ENCODE measurements at regions of chr12 and their contacts with region 1.

Region 1: DNA sequence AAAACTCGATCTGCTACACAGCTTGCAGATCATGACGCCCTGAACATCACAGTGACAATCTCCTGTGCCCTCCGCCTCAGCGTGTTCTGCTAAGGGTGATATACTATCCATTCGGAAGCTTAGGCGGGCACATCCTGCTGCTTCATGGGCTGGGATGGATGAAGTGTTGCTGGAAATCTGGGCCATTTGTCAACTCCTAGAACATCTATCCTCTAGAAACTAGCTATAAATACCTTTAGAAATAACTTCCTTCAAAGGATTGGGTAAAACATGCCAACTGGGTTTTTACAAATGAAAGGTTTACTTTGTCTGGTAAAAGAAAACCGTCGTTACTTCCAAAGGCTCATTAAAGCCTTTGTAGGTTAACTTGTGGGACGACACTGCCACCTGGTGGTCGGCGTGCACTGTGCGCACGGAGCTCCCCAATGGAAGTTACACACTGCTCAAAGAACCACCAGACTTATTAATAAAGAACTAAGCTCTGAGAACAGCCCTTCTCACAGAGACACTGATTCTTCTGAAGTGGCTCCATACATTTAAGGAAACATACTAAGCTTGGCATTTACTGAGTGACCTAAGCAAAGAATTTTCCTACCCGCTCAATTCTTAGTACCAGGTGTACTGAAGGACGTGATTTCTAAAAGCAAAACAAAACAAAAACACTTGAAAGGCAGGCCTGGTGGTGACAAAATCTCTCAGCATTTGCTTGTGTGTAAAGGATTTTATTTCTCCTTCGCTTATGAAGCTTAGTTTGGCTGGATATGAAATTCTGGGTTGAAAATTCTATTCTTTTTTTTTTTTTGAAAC is 21.6 kb upstream of the CACNA2D4 start:
- DNase-seq: peak; percentile 85 to 89
- H3K4me3 ChIP-seq: no peak overlapping the region
- H3K27ac ChIP-seq: no peak overlapping the region
- H3K4me1 ChIP-seq: peaks cover 22 to 28% of the 10 kb centered on the region in 2 donors
- H3K27me3 ChIP-seq: no peaks in the 10 kb centered on the region
- CTCF ChIP-seq: peak; percentile 88 to 95 (median 92)
- POLR2A ChIP-seq: no peak

Region 2: GRCh38 chr12:1773937-1774655 is 165.9 kb before region 1 on chr12:
- intact Hi-C with region 1: no loop called
- DNase-seq: no peak
- H3K4me3 ChIP-seq: no peak overlapping the region
- H3K27ac ChIP-seq: no peak overlapping the region
- H3K4me1 ChIP-seq: peaks cover 4 to 17% of the 10 kb centered on the region in 2 donors
- H3K27me3 ChIP-seq: no peaks in the 10 kb centered on the region
- CTCF ChIP-seq: no peak
- POLR2A ChIP-seq: no peak

Region 3: DNA sequence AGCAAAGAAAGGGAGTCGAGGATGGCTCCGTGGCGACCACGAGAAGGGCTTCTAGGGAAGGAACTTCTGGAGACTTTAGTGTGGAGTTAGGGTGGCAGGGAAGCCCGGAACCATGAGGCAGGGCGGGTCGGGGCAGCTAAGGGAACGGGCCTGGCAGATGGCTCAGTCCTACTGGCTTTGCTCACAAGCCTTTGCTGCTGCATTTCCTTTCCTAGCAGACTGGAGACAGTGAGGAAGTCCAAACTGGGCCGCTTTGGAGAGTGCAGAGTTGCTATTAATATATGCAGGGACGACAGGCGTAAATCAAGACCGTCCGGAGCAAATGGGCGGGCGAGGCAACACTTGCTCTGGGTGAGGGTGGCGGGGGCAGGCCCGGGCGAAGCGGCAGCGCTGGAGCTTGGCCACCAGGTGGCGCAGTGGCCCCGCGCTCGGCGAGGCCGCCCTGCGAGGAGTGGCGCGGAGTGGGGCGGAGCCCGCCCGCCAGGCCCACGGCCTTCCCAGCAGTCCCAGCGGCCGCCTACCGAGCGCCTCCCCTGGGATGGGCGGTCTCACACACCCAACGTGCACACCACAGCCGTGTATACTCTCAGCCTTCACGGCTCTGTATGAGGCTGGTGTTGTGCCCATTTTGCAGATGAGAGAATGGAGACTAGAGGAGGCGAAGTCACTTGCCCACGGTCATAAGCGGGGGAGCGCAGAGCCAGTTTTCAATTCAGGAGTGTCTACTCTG is 144.1 kb before region 1 on chr12:
- intact Hi-C with region 1: loop called (anchors 2 kb)
- DNase-seq: peak; percentile 92 to 93
- H3K4me3 ChIP-seq: peak overlapping the region; percentile 48 to 79 (median 57)
- H3K27ac ChIP-seq: peak overlapping the region; percentile 43 to 67 (median 51)
- H3K4me1 ChIP-seq: peaks cover 12 to 28% of the 10 kb centered on the region in 2 donors
- H3K27me3 ChIP-seq: no peaks in the 10 kb centered on the region
- CTCF ChIP-seq: peak; percentile 53 to 99 (median 98)
- POLR2A ChIP-seq: peak; percentile 49 to 67

Region 4: GRCh38 chr12:2228535-2228934 is 288.5 kb after region 1 on chr12:
- intact Hi-C with region 1: no loop called
- DNase-seq: no peak
- H3K4me3 ChIP-seq: no peak overlapping the region
- H3K27ac ChIP-seq: no peak overlapping the region
- H3K4me1 ChIP-seq: no peaks in the 10 kb centered on the region
- H3K27me3 ChIP-seq: no peaks in the 10 kb centered on the region
- CTCF ChIP-seq: no peak
- POLR2A ChIP-seq: no peak

Region 5: GRCh38 chr12:2239381-2239871 is 299.4 kb after region 1 on chr12:
- intact Hi-C with region 1: no loop called
- DNase-seq: no peak
- H3K4me3 ChIP-seq: no peak overlapping the region
- H3K27ac ChIP-seq: no peak overlapping the region
- H3K4me1 ChIP-seq: no peaks in the 10 kb centered on the region
- H3K27me3 ChIP-seq: no peaks in the 10 kb centered on the region
- CTCF ChIP-seq: no peak
- POLR2A ChIP-seq: no peak

Measured in thyroid gland (tissue), 4 donors.